ENCODE measurements at regions of chr3 and their contacts with region 1.

Region 1: GRCh38 chr3:40524568-40525285 is at the start of gene ZNF621:
- DNase-seq: peak; percentile 96
- total RNA-seq, gene ZNF621: 14.0 TPM

Region 2: GRCh38 chr3:40452876-40453730 is 71.6 kb before region 1 on chr3:
- intact Hi-C with region 1: loop called (anchors 2 kb)
- DNase-seq: peak; percentile 99

Region 3: GRCh38 chr3:40476478-40477470 is 48.0 kb before region 1 on chr3 and contains the start of gene ZNF619:
- intact Hi-C with region 1: loop called (anchors 2 kb)
- DNase-seq: peak; percentile 92
- total RNA-seq, gene ZNF619: 3.6 TPM

Region 4: DNA sequence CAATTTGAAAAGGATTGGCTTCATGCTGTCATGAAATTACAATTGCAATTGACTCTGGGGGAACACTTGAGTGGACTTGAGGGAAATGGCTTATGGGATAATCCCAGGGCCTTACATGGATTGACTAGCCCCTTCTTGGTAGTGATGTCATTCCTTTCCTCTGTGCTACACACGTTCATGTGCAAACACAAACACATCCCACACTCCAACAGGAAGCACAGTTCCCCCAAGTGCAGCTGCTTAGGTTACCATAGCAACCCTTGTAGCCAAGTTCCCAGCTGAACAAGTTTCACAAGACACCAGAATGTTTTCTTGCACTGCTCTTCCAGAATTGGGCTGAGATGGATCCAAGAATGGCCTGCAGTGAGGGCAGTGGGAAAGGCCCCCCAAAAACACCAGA is 217.0 kb after region 1 on chr3:
- intact Hi-C with region 1: no loop called
- DNase-seq: no peak

Measured in cardiac septum (tissue), 1 donor.